Gastrocnemius medialis (tissue), 4 donors: ENCODE measurements at regions of chr6 and their contacts with region 1.

Region 1: GRCh38 chr6:54267798-54268197 is 40.4 kb upstream of the TINAG start:
- DNase-seq: no peak
- ATAC-seq: no peak
- H3K4me3 ChIP-seq: no peak overlapping the region
- H3K27ac ChIP-seq: no peak overlapping the region
- H3K4me1 ChIP-seq: peaks cover 11 to 32% of the 10 kb centered on the region in 2 donors
- H3K27me3 ChIP-seq: no peaks in the 10 kb centered on the region
- CTCF ChIP-seq: peak in 3 of 5 experiments; percentile 12 to 29 (median 29)
- POLR2A ChIP-seq: no peak

Region 2: GRCh38 chr6:53986165-53986720 is 281.6 kb before region 1 on chr6:
- in situ Hi-C with region 1: loop called (anchors 5 to 25 kb)
- intact Hi-C with region 1: loop called (anchors 2 kb)
- DNase-seq: peak in 1 of 2 donors; percentile 43
- ATAC-seq: peak; percentile 75
- H3K4me3 ChIP-seq: no peak overlapping the region
- H3K27ac ChIP-seq: peak overlapping the region; percentile 44 to 62 (median 56)
- H3K4me1 ChIP-seq: peaks cover 27 to 41% of the 10 kb centered on the region in 2 donors
- H3K27me3 ChIP-seq: no peaks in the 10 kb centered on the region
- CTCF ChIP-seq: peak; percentile 66 to 82 (median 79)
- POLR2A ChIP-seq: no peak

Region 3: DNA sequence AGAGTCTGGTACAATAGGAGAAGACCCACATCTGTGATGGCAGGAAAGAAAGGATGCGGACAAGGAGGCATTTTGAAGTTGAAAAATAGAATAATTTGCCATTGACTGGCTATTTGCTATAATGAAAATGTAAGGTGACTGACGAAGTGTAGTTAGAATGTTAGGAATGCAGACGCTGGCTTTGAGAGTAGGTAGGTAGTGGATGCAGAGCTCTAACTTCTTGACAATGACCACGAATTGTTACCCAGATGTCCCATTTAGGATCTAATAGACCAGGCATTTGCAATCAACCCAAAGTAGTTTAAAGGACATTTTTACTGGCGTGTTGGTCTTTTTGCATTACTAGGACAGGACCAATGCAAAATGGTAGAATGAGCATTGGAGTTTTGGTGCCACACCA is 142.3 kb before region 1 on chr6:
- in situ Hi-C with region 1: no loop called
- intact Hi-C with region 1: no loop called
- DNase-seq: no peak
- ATAC-seq: no peak
- H3K4me3 ChIP-seq: no peak overlapping the region
- H3K27ac ChIP-seq: peak overlapping the region in 1 of 4 donors; percentile 25
- H3K4me1 ChIP-seq: peaks cover 22 to 48% of the 10 kb centered on the region in 2 donors
- H3K27me3 ChIP-seq: no peaks in the 10 kb centered on the region
- CTCF ChIP-seq: no peak
- POLR2A ChIP-seq: no peak

Region 4: DNA sequence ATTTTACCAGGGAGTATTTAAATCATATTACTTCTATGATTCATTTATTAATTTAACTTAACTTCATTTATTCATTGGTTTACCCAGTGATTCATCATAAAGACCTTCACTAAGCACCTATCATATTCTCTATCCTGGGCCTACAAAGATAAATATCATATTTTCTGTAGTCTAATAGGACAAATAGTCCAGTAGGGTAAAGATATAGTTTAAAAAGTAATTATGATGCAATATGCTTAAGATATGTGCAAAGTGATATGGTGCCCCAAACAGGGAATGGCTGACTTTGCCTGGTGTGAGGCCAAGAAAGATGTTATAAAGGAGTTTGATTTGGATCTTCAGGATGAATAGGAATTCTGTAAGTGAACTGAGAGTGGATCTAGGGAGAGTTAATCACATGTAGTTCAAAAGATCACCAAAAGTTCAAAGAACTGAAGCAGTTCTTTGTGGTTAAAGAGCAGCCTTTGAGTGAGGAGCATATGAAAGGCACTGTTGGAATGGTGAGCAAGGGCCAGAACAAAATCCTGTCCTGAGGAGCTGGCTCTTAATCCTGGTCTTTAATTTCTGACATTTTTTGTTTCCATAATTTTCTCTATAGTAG is 111.0 kb before region 1 on chr6:
- in situ Hi-C with region 1: no loop called
- intact Hi-C with region 1: no loop called
- DNase-seq: no peak
- ATAC-seq: no peak
- H3K4me3 ChIP-seq: no peak overlapping the region
- H3K27ac ChIP-seq: peak overlapping the region in 1 of 4 donors; percentile 2
- H3K4me1 ChIP-seq: peaks cover 4 to 12% of the 10 kb centered on the region in 2 donors
- H3K27me3 ChIP-seq: no peaks in the 10 kb centered on the region
- CTCF ChIP-seq: no peak
- POLR2A ChIP-seq: no peak

Region 5: DNA sequence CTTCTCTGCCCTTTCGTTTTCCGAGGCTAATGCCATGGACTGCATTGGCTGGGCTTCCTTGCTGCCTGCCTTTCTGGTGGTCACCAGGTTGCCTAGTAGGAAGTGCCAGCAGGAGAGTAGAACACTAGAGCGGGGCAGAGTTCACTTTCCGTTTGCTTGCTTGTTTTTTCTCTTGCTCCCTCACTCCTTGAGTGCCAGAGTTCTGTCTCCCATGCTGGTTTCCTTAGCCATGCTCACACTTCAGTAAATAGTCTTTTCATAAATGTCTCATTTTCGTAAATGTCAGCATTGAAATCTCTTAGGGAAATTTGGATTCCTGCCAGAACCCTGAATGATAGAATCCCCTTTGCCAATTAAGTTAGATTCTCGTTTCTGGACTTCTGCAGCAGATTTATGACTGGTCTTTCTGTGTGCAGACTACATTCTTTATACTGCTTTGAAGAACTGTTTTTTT is 642.7 kb after region 1 on chr6:
- in situ Hi-C with region 1: no loop called
- intact Hi-C with region 1: no loop called
- DNase-seq: no peak
- ATAC-seq: no peak
- H3K4me3 ChIP-seq: no peak overlapping the region
- H3K27ac ChIP-seq: no peak overlapping the region
- H3K4me1 ChIP-seq: no peaks in the 10 kb centered on the region
- H3K27me3 ChIP-seq: no peaks in the 10 kb centered on the region
- CTCF ChIP-seq: no peak
- POLR2A ChIP-seq: no peak